PC-3 (cell line): ENCODE measurements at regions of chr3 and their contacts with region 1.

Region 1: GRCh38 chr3:17841190-17841828 is 98.9 kb upstream of the TBC1D5 start:
- DNase-seq: peak; percentile 83
- ATAC-seq: peak; percentile 93
- H3K4me3 ChIP-seq: no peak overlapping the region
- H3K27ac ChIP-seq: no peak overlapping the region
- H3K4me1 ChIP-seq: peaks cover 3% of the 10 kb centered on the region; the same call in 1 of the 2 replicates
- H3K27me3 ChIP-seq: no peaks in the 10 kb centered on the region
- CTCF ChIP-seq: peak; percentile 98

Region 2: DNA sequence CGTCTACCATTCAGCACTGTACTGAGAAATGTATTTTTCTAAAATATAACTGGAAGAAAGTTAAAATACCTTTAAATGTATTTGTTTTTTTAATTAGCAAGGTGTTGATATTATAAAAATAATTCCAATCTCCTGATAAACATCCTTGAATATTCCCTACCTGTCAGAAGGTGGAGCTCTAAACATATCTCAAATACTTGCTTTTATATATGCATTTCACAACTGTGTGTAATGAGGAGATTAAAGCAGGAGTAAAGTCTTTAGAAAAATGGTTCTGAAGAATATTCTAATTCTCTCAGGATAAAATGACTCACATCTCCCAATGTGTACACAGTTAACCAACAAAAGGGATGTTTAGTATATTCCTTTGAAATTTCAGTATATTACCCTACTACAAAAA is 533.8 kb before region 1 on chr3:
- CTCF ChIA-PET with region 1: no interaction called
- POLR2A ChIA-PET with region 1: no interaction called
- intact Hi-C with region 1: loop called (anchors 5 kb)
- DNase-seq: peak; percentile 45
- ATAC-seq: peak; percentile 80
- H3K4me3 ChIP-seq: no peak overlapping the region
- H3K27ac ChIP-seq: no peak overlapping the region
- H3K4me1 ChIP-seq: no peaks in the 10 kb centered on the region
- H3K27me3 ChIP-seq: no peaks in the 10 kb centered on the region
- CTCF ChIP-seq: peak; percentile 63

Region 3: DNA sequence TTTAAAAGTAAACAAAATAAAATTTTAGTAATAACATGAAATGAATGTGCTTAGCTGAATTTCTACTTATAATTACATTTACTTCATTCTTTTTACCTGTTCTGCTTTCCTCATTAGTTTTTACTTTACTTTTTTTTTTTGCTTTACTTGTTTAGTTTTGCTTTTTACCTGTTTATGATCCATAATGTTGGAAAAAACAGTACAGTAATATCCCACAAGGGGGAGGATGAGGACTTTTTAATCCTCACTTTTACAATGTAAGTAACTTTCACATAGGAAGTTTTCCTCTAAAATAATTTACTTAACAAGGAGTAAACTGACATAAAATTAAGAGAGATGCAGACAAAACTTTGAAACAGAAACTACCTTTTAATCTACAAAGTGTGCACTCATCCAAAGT is 367.5 kb before region 1 on chr3:
- CTCF ChIA-PET with region 1: no interaction called
- POLR2A ChIA-PET with region 1: no interaction called
- intact Hi-C with region 1: loop called (anchors 1 kb)
- DNase-seq: peak; percentile 40
- ATAC-seq: no peak
- H3K4me3 ChIP-seq: no peak overlapping the region
- H3K27ac ChIP-seq: no peak overlapping the region
- H3K4me1 ChIP-seq: peaks cover 8% of the 10 kb centered on the region; the same call in 1 of the 2 replicates
- H3K27me3 ChIP-seq: no peaks in the 10 kb centered on the region
- CTCF ChIP-seq: peak; percentile 66

Region 4: GRCh38 chr3:17553080-17553479 is 288.2 kb before region 1 on chr3:
- CTCF ChIA-PET with region 1: no interaction called
- POLR2A ChIA-PET with region 1: no interaction called
- intact Hi-C with region 1: no loop called
- DNase-seq: no peak
- ATAC-seq: no peak
- H3K4me3 ChIP-seq: no peak overlapping the region
- H3K27ac ChIP-seq: no peak overlapping the region
- H3K4me1 ChIP-seq: no peaks in the 10 kb centered on the region
- H3K27me3 ChIP-seq: no peaks in the 10 kb centered on the region
- CTCF ChIP-seq: no peak

Region 5: DNA sequence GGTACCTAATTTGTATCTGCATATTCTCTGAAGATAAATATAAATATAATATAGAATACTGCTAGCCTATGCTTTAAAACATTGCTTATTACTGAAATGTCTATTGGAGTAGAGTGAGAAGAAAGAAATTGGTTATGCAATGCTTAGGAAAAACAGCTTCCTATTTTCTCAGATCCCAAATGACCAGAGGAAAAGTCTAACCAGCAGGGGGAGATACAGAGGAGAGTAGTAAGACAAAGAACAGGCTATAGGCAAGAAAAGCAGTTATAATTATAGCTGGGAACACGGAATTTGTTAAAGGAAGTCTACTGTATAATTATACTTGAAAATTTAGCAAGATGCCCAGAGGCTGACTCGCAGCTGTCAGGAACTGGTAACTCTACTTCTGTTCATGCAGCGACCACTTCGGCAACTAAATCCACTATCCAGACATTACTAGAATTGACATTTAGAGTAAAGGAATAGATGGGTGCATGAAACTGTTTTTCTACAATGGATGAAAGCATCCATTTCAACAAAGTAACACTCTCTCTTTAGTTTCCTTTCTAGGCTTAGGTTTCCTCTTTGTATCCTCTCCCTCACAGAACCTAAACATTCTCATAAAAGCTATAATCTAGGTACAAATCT is 196.1 kb before region 1 on chr3:
- CTCF ChIA-PET with region 1: interaction called, 21 read pairs
- POLR2A ChIA-PET with region 1: no interaction called
- intact Hi-C with region 1: loop called (anchors 1 kb)
- DNase-seq: peak; percentile 85
- ATAC-seq: peak; percentile 89
- H3K4me3 ChIP-seq: no peak overlapping the region
- H3K27ac ChIP-seq: no peak overlapping the region
- H3K4me1 ChIP-seq: peaks cover 4% of the 10 kb centered on the region; the same call in 1 of the 2 replicates
- H3K27me3 ChIP-seq: no peaks in the 10 kb centered on the region
- CTCF ChIP-seq: peak; percentile 85

Region 6: GRCh38 chr3:17775073-17775472 is 66.2 kb before region 1 on chr3:
- CTCF ChIA-PET with region 1: interaction called, 6 read pairs
- POLR2A ChIA-PET with region 1: no interaction called
- intact Hi-C with region 1: loop called (anchors 1 kb)
- DNase-seq: no peak
- ATAC-seq: no peak
- H3K4me3 ChIP-seq: no peak overlapping the region
- H3K27ac ChIP-seq: no peak overlapping the region
- H3K4me1 ChIP-seq: no peaks in the 10 kb centered on the region
- H3K27me3 ChIP-seq: no peaks in the 10 kb centered on the region
- CTCF ChIP-seq: no peak